ENCODE measurements at regions of chr1 and their contacts with region 1.

Region 1: DNA sequence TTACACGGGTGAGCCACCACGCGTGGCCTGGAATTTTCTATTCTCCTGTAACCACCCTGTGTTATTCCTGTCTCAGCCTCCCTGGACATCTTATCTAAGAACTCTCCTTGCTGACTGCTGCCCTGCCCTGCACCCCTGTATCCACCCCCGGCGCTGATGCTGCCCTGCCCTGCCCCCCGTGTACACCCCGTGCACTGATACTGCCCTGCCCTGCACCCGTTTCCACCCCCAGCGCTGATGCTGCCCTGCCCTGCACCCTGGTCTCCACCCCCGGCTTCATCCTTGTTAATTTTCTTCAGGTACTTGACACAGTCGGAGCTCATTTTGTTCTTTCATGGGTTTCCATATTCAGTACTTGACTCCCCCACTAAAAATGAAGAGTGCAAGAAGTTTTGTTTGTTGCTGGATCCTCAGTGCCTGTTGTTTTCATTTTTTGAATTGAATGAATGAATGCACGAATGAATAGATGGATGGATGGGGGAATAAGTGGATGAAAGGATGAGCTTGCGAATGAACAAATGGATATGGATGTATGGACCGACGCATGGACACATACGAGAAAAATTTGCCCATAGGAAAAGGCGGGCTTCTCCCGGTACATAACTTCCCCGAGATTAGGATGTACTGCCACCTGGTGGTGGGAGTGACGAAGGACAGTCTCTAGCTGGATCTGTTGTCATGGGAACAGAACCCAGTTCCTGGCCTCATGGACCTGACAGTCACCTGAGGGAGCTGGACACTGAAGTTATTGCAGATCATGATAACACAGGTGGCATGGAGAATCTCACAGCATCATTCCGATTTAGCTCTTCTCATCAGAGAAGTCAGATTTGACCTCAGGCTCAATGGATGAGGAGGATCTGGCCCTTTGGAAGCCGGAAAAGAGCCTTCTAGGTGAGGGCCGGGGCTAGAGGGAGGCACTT is 14.9 kb downstream of the AADACL4 start:
- DNase-seq: peak; percentile 92
- H3K4me3 Mint-ChIP-seq: peak overlapping the region; percentile 48
- H3K27ac Mint-ChIP-seq: peak overlapping the region; percentile 6
- H3K4me1 Mint-ChIP-seq: peaks cover 6% of the 10 kb centered on the region
- H3K27me3 Mint-ChIP-seq: peaks cover 11% of the 10 kb centered on the region

Region 2: GRCh38 chr1:12229835-12230548 is 428.8 kb before region 1 on chr1 and contains the start of gene VPS13D:
- intact Hi-C with region 1: loop called (anchors 2 kb)
- DNase-seq: peak; percentile 96
- H3K4me3 Mint-ChIP-seq: peak within 1 kb of the TSS; percentile 87
- H3K27ac Mint-ChIP-seq: peak within 1 kb of the TSS; percentile 37
- H3K4me1 Mint-ChIP-seq: peaks cover 8% of the 10 kb centered on the region
- H3K27me3 Mint-ChIP-seq: peaks cover 4% of the 10 kb centered on the region
- total RNA-seq, gene VPS13D: 26.9 and 30.8 TPM in 2 replicates

Region 3: DNA sequence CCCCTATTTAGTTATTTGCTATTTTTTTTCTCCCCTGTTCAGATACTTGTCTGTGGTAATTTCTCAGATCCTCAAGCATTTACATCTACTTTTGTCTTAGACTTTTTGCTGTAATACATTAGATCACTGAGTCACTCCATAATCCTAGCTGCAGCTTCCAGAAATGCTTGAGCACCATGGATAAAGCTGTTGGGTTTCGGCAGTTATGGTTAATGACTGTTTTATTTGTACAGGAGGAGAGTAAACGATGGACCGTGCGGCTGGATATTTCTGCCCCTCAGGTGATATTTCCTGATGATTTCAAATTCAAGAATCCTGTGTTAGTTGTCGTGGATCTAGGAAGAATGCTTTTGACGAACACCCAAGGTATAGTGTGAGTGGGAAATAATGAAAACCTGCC is 386.0 kb before region 1 on chr1:
- intact Hi-C with region 1: loop called (anchors 2 kb)
- DNase-seq: no peak
- H3K4me3 Mint-ChIP-seq: no peak overlapping the region
- H3K27ac Mint-ChIP-seq: no peak overlapping the region
- H3K4me1 Mint-ChIP-seq: no peaks in the 10 kb centered on the region
- H3K27me3 Mint-ChIP-seq: no peaks in the 10 kb centered on the region

Region 4: GRCh38 chr1:12314333-12314903 is 344.4 kb before region 1 on chr1:
- intact Hi-C with region 1: loop called (anchors 1 kb)
- DNase-seq: no peak
- H3K4me3 Mint-ChIP-seq: no peak overlapping the region
- H3K27ac Mint-ChIP-seq: no peak overlapping the region
- H3K4me1 Mint-ChIP-seq: no peaks in the 10 kb centered on the region
- H3K27me3 Mint-ChIP-seq: no peaks in the 10 kb centered on the region

Region 5: DNA sequence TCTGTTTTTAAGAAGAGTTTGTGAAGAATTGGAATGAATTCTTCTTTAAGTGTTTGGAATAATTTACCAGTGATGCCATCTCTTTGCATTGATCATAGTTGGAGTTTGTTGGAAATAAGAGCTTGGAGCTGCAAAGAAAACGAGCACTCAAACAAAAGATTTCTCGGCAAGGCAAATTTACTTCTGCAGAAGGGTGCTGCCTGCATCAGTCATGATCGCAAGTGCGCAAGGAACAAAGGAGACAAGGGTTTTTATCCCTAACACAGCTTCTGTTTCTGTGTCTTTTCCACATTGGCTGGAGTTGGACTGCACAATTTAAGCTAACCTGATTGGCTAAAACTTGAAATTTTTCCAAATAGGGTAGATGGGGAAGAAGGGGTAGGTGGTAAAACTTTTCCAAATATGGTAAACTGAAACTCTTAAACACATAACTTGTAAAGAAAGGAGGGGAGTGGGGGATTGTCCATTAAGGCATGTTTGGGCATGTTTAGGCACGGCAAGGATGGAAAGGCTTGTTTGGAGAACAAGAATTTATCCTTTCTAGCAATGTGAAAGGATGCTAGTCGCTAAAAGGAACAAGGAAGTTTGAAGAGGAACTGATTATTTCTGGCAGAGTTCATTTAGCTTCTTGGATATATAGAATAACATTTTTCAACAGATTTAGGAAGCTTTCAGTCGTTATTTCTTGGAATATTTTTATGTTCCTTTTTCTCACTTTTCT is 18.4 kb before region 1 on chr1:
- intact Hi-C with region 1: no loop called
- DNase-seq: no peak
- H3K4me3 Mint-ChIP-seq: no peak overlapping the region
- H3K27ac Mint-ChIP-seq: no peak overlapping the region
- H3K4me1 Mint-ChIP-seq: no peaks in the 10 kb centered on the region
- H3K27me3 Mint-ChIP-seq: peaks cover 6% of the 10 kb centered on the region